PC-9 (cell line): ENCODE measurements at regions of chr12 and their contacts with region 1.

Region 1: GRCh38 chr12:74586251-74586650 is 48.6 kb downstream of the ATXN7L3B start:
- DNase-seq: no peak
- H3K4me3 ChIP-seq: no peak overlapping the region
- H3K27ac ChIP-seq: no peak overlapping the region
- H3K4me1 ChIP-seq: no peaks in the 10 kb centered on the region
- H3K27me3 ChIP-seq: no peaks in the 10 kb centered on the region
- CTCF ChIP-seq: no peak

Region 2: DNA sequence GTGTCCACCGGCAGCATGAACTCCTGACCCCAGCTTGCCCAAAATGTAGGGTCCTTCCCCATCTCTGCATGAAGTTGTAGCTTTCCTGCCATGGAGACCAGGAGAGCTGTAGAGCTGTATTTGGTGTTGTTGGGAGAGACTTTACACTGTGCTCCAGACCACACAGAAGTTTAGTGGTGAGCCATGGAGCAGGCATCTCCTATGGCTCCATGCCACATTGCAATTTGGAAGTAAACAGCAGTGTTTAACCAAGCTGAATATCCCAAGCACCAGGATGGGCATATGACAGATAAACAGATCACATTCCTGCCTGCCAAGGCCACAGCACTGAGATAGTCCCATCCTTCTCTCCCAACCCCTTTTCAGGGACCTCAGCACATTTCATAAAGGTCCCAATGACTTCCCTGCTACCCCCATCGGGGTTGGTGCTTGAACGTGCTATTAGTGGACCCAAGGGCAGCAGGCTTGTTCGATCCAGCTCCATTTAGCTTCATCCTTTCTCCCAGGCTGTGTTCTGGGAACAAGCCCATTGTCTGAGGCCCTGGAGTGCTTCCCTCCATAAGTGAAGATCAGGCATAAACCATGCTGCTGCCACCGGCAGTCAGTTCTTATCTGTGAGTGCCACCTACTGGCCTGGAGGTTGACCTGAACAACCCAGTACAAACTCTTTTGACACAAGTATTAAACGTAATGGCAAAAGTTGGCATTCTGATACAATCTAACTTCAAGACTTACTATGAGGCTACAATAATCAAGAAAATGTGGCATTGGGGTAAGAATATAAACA is 220.9 kb before region 1 on chr12:
- CTCF ChIA-PET with region 1: no interaction called
- POLR2A ChIA-PET with region 1: interaction called, 19 read pairs
- intact Hi-C with region 1: no loop called
- DNase-seq: peak in 1 of 2 experiments; percentile 15
- H3K4me3 ChIP-seq: no peak overlapping the region
- H3K27ac ChIP-seq: no peak overlapping the region
- H3K4me1 ChIP-seq: no peaks in the 10 kb centered on the region
- H3K27me3 ChIP-seq: no peaks in the 10 kb centered on the region
- CTCF ChIP-seq: peak; percentile 68

Region 3: DNA sequence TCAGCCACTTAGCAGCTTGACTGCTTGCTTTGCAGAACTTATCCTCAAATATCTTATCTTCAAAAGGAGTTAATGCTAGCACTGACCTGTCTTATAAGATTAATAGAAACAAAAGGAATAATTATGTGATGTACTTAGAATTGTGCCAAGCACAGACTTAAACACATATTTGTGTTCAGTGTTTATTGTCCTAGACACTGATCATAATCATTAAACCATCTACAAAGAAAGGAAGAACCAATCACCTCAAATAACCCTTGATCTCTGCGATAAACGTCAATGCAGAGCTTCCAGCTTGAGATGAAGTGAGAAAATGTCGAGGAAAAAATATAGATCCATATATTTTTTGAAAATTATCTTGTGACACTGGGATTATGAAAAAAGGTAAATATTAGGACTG is 24.5 kb after region 1 on chr12:
- CTCF ChIA-PET with region 1: no interaction called
- POLR2A ChIA-PET with region 1: no interaction called
- intact Hi-C with region 1: no loop called
- DNase-seq: no peak
- H3K4me3 ChIP-seq: no peak overlapping the region
- H3K27ac ChIP-seq: no peak overlapping the region
- H3K4me1 ChIP-seq: no peaks in the 10 kb centered on the region
- H3K27me3 ChIP-seq: no peaks in the 10 kb centered on the region
- CTCF ChIP-seq: no peak